Cardiac septum (tissue), 1 donor: ENCODE measurements at regions of chr12 and their contacts with region 1.

Region 1: DNA sequence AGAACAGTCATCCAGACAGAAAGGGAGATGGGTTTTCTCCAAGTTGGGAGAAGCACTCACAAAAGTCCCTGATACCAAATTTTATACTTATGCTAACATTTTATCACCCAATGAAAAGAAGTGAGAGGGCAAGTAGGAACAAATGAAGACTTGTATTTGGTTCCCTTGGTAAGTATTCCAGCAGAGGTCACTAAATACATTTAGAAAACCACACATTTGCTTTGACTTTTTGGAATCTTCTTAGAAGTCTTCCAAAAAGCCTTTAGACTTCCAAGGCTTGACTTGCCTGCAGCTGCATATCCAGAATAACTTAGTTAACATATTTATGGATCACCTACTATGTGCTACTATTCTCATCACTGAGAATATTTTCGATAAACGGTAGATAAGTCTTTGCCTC is 3.1 kb upstream of the GYS2 start:
- DNase-seq: no peak

Region 2: GRCh38 chr12:21580748-21581516 is 26.8 kb before region 1 on chr12:
- intact Hi-C with region 1: no loop called
- DNase-seq: no peak

Region 3: DNA sequence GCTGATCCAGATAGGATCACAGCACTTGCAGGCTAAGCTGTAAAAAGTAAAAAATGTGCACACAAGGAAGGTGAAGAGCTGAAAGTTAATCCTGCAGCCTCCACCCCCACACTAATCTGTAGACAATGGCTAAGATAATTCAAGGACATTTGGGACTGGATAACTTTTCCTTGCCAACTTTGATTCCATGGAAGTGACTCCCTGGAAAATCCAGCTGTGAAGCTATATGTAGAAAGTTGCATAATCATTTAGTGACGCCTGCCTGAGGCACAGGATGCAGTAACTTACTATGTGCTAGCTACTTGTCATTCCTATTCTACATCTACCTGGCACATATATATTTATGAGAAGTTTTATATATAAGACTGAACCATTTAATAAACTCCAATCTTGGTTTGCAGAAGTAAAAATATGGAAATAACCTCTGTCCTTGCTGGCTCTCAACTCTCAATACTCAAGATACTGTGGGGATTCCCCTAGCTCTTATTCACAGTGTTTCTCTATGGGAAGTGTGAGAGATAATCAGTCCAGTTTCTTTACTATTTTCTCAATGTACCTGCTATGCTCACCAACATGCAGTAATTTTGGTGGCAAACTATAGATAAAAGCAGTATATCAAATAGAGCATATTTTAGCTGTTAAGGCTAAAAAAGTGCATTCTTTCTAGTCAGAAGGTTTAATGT is 35.1 kb after region 1 on chr12:
- intact Hi-C with region 1: no loop called
- DNase-seq: no peak

Region 4: GRCh38 chr12:21677622-21678277 is 70.0 kb after region 1 on chr12:
- intact Hi-C with region 1: loop called (anchors 2 kb)
- DNase-seq: no peak